ENCODE measurements at regions of chr16 and their contacts with region 1.

Region 1: GRCh38 chr16:30429678-30430427 is at the start of gene DCTPP1:
- DNase-seq: peak; percentile 99
- ATAC-seq: peak; percentile 98
- H3K4me3 Mint-ChIP-seq: no peak within 1 kb of the TSS
- H3K27ac Mint-ChIP-seq: no peak within 1 kb of the TSS
- H3K4me1 Mint-ChIP-seq: peaks cover 38% of the 10 kb centered on the region
- H3K27me3 Mint-ChIP-seq: no peaks in the 10 kb centered on the region
- total RNA-seq, gene DCTPP1: 72.0 to 108 TPM

Region 2: DNA sequence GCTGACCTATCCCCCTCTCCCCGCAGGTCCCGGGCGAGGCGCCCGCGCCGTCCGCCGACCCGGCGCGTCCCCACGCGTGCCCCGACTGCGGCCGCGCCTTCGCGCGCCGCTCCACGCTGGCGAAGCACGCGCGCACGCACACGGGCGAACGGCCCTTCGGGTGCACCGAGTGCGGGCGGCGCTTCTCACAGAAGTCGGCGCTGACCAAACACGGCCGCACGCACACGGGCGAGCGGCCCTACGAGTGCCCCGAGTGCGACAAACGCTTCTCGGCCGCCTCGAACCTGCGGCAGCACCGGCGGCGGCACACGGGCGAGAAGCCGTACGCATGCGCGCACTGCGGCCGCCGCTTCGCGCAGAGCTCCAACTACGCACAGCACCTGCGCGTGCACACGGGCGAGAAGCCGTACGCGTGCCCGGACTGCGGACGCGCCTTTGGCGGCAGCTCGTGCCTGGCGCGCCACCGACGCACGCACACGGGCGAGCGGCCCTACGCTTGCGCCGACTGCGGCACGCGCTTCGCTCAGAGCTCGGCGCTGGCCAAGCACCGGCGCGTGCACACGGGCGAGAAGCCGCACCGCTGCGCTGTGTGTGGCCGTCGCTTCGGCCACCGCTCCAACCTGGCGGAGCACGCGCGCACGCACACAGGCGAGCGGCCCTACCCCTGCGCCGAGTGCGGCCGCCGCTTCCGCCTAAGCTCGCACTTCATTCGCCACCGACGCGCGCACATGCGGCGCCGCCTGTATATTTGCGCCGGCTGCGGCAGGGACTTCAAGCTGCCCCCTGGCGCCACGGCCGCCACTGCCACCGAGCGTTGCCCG is 12.1 kb before region 1 on chr16:
- CTCF ChIA-PET with region 1: interaction called, 33 read pairs
- DNase-seq: peak; percentile 93
- ATAC-seq: peak; percentile 91
- H3K4me3 Mint-ChIP-seq: peak overlapping the region; percentile 64
- H3K27ac Mint-ChIP-seq: peak overlapping the region; percentile 48
- H3K4me1 Mint-ChIP-seq: peaks cover 31% of the 10 kb centered on the region
- H3K27me3 Mint-ChIP-seq: no peaks in the 10 kb centered on the region

Region 3: GRCh38 chr16:30472328-30472942 is 42.6 kb after region 1 on chr16 and contains the start of gene ITGAL:
- CTCF ChIA-PET with region 1: interaction called, 29 read pairs
- DNase-seq: peak; percentile 95
- ATAC-seq: peak; percentile 77
- H3K4me3 Mint-ChIP-seq: peak within 1 kb of the TSS; percentile 100
- H3K27ac Mint-ChIP-seq: peak within 1 kb of the TSS; percentile 96
- H3K4me1 Mint-ChIP-seq: peaks cover 64% of the 10 kb centered on the region
- H3K27me3 Mint-ChIP-seq: no peaks in the 10 kb centered on the region
- total RNA-seq, gene ITGAL: 566 to 685 TPM

Region 4: DNA sequence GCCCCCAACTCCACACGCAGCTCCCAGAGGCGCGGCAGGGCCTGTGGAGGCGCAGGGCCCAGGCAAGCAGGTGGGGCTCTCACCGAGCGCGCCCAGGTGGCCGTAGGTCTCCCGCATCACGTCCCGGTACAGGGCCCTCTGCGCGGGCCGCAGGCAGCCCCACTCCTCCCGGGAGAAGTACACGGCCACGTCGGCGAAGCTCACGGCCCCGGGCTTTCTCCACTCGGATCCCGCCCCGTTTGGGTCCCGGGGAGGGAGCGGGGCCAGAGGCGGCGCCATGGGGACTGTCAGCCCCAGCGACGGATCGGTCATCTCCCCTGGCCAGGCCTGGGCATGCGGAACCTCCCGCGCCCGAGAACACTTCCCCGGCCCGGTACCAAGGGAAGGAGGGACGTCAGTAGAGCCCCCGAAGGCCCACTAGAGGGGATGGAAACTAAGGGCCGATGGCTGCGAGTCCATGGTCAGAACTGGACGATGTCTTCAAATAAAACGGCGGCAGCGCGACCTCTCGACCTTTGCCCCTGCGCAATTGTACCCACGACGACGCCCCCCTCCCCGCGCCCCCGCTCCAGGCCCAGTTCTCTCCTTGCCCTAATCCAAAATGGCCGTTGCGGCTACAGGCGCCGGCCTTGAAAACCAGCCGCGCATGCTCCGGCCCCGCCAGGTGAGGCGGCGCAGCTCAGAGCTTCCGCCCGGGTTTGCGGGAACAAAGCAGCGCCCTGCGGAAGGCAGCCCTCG is 104.7 kb after region 1 on chr16 and contains the start of gene ZNF747:
- CTCF ChIA-PET with region 1: interaction called, 31 read pairs
- DNase-seq: peak; percentile 94
- ATAC-seq: peak; percentile 86
- H3K4me3 Mint-ChIP-seq: peak within 1 kb of the TSS; percentile 82
- H3K27ac Mint-ChIP-seq: peak within 1 kb of the TSS; percentile 96
- H3K4me1 Mint-ChIP-seq: peaks cover 30% of the 10 kb centered on the region
- H3K27me3 Mint-ChIP-seq: no peaks in the 10 kb centered on the region
- total RNA-seq, gene ZNF747: 11.3 to 13.2 TPM

Region 5: GRCh38 chr16:30602616-30603277 is 172.9 kb after region 1 on chr16:
- CTCF ChIA-PET with region 1: interaction called, 13 read pairs
- DNase-seq: no peak
- ATAC-seq: no peak
- H3K4me3 Mint-ChIP-seq: no peak overlapping the region
- H3K27ac Mint-ChIP-seq: no peak overlapping the region
- H3K4me1 Mint-ChIP-seq: peaks cover 12% of the 10 kb centered on the region
- H3K27me3 Mint-ChIP-seq: no peaks in the 10 kb centered on the region

Region 6: GRCh38 chr16:30628627-30629540 is 199.0 kb after region 1 on chr16:
- CTCF ChIA-PET with region 1: interaction called, 12 read pairs
- DNase-seq: peak; percentile 93
- ATAC-seq: peak; percentile 93
- H3K4me3 Mint-ChIP-seq: peak overlapping the region; percentile 54
- H3K27ac Mint-ChIP-seq: peak overlapping the region; percentile 71
- H3K4me1 Mint-ChIP-seq: peaks cover 17% of the 10 kb centered on the region
- H3K27me3 Mint-ChIP-seq: peaks cover under 1% of the 10 kb centered on the region

Region 7: GRCh38 chr16:30997000-30997886 is 567.4 kb after region 1 on chr16:
- CTCF ChIA-PET with region 1: no interaction called
- DNase-seq: peak; percentile 92
- ATAC-seq: peak; percentile 98
- H3K4me3 Mint-ChIP-seq: peak overlapping the region; percentile 81
- H3K27ac Mint-ChIP-seq: peak overlapping the region; percentile 88
- H3K4me1 Mint-ChIP-seq: peaks cover 34% of the 10 kb centered on the region
- H3K27me3 Mint-ChIP-seq: peaks cover 11% of the 10 kb centered on the region